Left cardiac atrium (tissue), 4 donors: ENCODE measurements at regions of chr3 and their contacts with region 1.

Region 1: GRCh38 chr3:141076797-141077571 is 25.8 kb downstream of the SPSB4 start:
- DNase-seq: peak; percentile 67
- ATAC-seq: peak; percentile 72 to 76

Region 2: DNA sequence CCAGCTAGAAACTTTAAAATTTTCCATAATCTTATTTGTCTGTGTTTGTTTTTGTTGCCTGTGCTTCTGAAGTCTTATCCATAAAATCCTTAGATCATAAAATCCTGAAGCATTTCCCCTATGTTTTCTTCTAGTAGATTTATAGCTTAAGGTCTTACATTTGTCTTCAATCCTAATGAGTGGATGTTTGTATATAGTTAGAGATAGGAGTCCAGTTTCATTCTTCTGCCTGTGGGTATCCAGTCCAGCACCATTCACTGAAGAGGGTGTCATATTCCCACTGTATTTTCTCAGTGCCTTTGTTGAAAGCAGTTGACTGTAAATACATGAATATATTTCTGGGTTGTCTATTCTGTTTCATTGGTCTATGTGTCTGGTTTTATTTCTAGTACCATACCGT is 70.6 kb before region 1 on chr3:
- intact Hi-C with region 1: no loop called
- DNase-seq: no peak
- ATAC-seq: no peak

Region 3: DNA sequence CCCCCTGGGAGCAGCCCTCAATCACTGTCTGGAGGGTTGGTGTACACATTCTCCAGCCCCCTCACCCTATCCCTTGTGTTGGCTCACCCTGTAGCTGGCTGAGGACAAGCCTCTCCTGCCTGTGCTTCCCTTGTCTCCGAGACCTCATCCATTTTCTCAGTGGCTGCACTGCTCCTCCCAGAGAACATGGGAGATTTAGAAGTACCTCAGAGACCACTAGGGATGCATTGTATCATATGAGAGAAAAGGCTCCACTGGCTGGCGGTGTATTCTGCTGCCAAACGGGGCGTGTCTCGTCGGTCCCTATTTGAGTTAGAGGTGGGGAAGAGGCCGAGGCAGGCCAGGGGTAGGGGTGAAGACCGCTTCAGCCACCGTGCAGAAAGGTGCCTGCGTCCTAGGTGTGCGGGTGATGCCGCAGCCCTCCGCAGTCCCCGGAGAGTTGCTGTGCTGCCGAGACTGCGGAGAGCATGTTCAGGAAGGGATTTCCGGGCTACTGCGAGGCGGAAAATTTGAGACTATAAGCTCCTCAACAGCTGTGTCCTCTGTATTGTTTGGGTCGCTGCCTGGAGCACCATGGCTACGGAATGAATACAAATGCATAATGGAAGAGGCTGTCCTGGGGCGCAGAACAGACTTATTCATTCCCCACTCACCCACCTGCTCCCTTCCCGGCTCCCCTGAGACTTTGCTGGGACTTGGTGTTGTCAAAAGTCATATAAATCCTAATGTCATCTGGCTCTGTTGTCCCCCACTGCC is 18.0 kb after region 1 on chr3:
- intact Hi-C with region 1: loop called in 1 of 2 experiments (anchors 1 kb)
- DNase-seq: peak; percentile 88
- ATAC-seq: peak; percentile 77 to 86